Esophagus muscularis mucosa (tissue), 4 donors: ENCODE measurements at regions of chr3 and their contacts with region 1.

Region 1: DNA sequence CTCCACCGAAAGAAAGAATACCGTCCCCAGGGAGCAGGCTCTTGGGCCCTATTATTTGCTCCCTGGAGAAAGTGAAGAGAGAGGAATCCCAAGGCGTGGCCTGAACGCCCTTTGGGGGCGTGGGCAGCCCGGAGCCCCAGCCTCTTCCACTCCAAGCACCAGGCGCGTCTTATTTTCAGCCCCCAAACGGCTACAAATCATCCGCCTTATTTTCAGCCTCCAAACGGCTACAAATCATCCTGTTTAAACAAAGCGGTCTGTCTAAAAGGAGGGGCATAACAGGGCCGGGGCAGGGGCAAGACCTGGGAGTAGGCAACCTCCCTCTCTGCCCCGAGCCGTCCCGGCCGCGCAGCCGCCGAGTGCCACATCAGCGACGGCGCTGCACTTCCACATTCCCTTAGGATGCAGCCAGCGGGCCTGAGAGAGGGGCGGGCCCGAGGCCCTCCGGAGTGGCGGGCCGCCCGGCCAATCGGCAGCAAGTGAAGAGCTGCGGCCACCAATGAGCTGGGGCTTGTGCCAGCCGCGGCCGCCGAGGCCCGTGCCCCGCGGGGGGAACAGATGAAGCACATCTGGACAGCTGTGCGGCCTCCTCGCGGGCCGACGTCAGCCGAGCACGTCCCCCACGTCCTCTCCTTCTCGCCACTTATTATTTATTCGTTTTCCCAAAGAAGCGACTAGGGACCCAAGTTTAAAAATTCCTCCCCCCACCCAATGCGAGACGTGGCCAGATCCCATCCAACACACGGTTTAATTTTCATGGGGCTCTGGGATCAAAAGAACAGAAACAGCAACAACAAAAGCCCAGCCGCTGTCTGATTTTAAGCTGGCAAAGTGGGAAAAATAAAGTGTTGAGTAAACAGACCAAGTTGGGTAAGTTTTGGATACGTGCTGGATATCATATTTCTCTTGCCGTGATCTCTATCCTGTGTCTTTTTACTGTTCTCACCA is at the start of gene TMEM45A:
- DNase-seq: peak; percentile 98
- H3K4me3 ChIP-seq: peak within 1 kb of the TSS; percentile 59 to 78 (median 64)
- H3K27ac ChIP-seq: peak within 1 kb of the TSS; percentile 77 to 89 (median 88)
- H3K4me1 ChIP-seq: peaks cover 5 to 16% (median 13%) of the 10 kb centered on the region in 4 donors
- H3K27me3 ChIP-seq: no peaks in the 10 kb centered on the region
- CTCF ChIP-seq: peak in 1 of 3 experiments; percentile 12
- EP300 ChIP-seq: no peak
- POLR2A ChIP-seq: no peak
- total RNA-seq, gene TMEM45A: 8.7 to 17.2 (median 9.6) TPM

Region 2: DNA sequence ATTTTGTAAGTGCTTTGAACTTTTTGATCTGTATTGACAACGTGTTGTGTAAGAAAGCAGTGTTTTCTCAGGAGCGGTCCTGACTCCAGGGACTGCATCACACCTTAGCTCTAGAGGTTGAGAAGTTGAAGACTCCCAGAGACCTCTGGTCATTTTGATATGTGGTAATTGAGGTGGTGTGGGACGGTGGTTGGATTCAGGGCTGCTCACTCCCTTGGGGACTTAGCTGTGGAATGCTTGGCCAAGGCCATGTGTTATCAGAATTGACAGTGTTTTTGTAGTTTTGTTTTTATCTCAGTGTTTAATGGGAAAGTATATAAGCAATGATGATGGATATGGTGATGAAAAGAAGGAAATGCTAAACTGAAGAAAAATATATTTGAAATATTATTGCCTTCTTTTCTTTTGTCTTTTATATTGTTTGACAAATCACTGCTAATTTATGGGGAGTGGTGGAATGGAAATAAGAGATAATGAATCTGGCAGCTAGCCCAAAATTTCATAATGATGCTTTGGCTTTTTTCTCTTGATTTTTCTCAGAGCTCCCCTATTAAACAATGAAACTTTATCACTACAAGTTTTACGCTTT is 658.6 kb before region 1 on chr3:
- intact Hi-C with region 1: loop called (anchors 10 kb)
- DNase-seq: no peak
- H3K4me3 ChIP-seq: no peak overlapping the region
- H3K27ac ChIP-seq: peak overlapping the region in 1 of 4 donors; percentile 14
- H3K4me1 ChIP-seq: peaks cover 0 to 26% (median 20%) of the 10 kb centered on the region in 4 donors
- H3K27me3 ChIP-seq: no peaks in the 10 kb centered on the region
- CTCF ChIP-seq: no peak
- EP300 ChIP-seq: no peak
- POLR2A ChIP-seq: no peak

Region 3: DNA sequence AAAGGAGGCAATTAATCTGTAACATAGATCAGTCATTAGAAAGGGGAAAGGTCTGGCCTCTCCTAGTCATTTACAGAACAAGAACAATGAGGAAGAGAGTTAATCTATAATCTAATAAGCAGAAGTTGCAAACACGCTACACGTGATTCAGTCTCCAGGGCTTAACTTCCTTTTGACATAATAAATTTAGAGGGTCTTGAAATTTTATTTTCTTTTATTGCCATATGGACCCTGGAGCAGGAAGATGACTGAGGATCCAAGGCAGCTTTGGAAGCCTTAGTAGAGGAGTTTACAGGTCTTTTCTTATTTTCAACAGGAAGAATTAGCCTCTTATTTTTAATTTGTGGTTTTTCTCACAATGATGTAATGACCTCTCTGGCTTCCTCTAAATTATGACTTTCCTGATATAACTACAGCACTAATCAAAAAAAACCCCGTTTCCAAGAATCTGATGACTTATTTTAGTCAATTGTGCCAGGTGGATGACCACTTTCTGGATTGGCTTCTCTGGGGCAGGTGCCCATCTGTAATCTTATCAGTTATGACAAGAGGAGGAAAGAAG is 149.2 kb after region 1 on chr3:
- intact Hi-C with region 1: no loop called
- DNase-seq: no peak
- H3K4me3 ChIP-seq: no peak overlapping the region
- H3K27ac ChIP-seq: no peak overlapping the region
- H3K4me1 ChIP-seq: no peaks in the 10 kb centered on the region
- H3K27me3 ChIP-seq: no peaks in the 10 kb centered on the region
- CTCF ChIP-seq: no peak
- EP300 ChIP-seq: no peak
- POLR2A ChIP-seq: no peak

Region 4: GRCh38 chr3:100776746-100777145 is 284.4 kb after region 1 on chr3:
- intact Hi-C with region 1: no loop called
- DNase-seq: no peak
- H3K4me3 ChIP-seq: no peak overlapping the region
- H3K27ac ChIP-seq: no peak overlapping the region
- H3K4me1 ChIP-seq: no peaks in the 10 kb centered on the region
- H3K27me3 ChIP-seq: no peaks in the 10 kb centered on the region
- CTCF ChIP-seq: no peak
- EP300 ChIP-seq: no peak
- POLR2A ChIP-seq: no peak